Panc1 (cell line): ENCODE measurements at regions of chr18 and their contacts with region 1.

Region 1: DNA sequence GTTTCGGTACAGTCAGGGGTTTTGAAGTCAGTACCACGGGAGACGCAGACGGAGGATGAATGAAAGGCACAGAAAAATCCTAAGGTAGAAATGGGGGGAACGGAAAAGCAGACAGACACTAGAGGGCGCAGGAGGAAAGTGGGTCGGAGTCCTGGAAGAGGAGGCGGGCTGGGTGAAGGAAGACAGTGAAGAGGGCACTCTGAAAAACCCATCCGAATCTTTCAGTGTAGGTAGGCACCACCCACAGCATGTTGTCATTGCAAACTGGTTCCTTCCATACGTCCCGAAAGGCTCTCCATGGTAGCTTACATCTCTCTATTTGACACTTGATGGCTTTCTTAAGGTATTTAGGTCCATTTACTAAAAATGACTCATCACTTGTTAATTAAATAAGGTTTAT is 18.5 kb upstream of the ZNF236 start:
- DNase-seq: peak; percentile 79
- ATAC-seq: peak; percentile 81
- H3K4me3 ChIP-seq: peak overlapping the region in 1 of 2 experiments; percentile 35; a peak in 2 of 4 replicates
- H3K27ac ChIP-seq: no peak overlapping the region; the same call in 1 of the 2 replicates
- H3K4me1 ChIP-seq: peaks cover 4% of the 10 kb centered on the region
- H3K27me3 ChIP-seq: no peaks in the 10 kb centered on the region
- CTCF ChIP-seq: no peak

Region 2: DNA sequence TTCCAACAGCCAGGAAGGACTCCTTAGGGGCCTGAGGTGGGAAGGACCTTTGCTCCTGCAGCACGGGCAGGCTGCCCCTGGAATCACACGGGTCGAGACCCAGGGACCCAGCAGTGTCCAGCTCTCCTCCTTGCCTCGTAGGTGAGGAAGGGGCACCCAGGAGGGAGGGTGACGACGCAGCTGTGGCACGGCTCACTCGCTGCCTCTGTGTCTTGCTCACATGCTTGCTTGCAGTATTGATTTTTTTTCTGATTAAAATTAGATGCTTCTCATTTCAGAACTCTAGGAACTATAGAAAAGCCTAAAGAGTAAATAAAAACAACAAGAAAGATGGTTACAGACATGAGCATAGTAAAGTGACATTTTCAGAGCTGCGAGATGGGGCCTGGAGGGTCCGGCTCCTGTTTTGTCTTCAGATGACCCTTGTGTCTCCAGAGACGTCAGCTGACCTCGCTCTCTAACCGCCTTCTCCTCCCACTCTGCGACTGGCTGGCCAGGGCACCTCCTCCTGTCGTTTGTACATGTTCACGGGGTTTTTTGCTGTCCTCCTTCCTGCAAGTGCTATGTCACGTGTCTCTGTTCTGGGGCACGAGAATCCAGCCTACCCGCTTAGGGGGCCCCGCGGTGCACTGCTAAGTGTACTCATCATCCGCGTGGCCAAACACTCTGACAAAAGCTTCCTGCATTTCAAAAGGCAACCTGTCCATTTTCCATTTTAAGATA is 47.1 kb before region 1 on chr18:
- CTCF ChIA-PET with region 1: interaction called, 10 read pairs
- POLR2A ChIA-PET with region 1: no interaction called
- in situ Hi-C with region 1: no loop called
- intact Hi-C with region 1: no loop called
- DNase-seq: no peak
- ATAC-seq: no peak
- H3K4me3 ChIP-seq: no peak overlapping the region
- H3K27ac ChIP-seq: no peak overlapping the region
- H3K4me1 ChIP-seq: no peaks in the 10 kb centered on the region
- H3K27me3 ChIP-seq: no peaks in the 10 kb centered on the region
- CTCF ChIP-seq: no peak

Region 3: GRCh38 chr18:76875390-76876325 is 71.8 kb after region 1 on chr18:
- CTCF ChIA-PET with region 1: interaction called, 3 read pairs
- POLR2A ChIA-PET with region 1: no interaction called
- in situ Hi-C with region 1: no loop called
- intact Hi-C with region 1: loop called (anchors 2 kb)
- DNase-seq: peak; percentile 51
- ATAC-seq: peak; percentile 92
- H3K4me3 ChIP-seq: no peak overlapping the region
- H3K27ac ChIP-seq: no peak overlapping the region
- H3K4me1 ChIP-seq: no peaks in the 10 kb centered on the region
- H3K27me3 ChIP-seq: no peaks in the 10 kb centered on the region
- CTCF ChIP-seq: peak; percentile 97

Region 4: DNA sequence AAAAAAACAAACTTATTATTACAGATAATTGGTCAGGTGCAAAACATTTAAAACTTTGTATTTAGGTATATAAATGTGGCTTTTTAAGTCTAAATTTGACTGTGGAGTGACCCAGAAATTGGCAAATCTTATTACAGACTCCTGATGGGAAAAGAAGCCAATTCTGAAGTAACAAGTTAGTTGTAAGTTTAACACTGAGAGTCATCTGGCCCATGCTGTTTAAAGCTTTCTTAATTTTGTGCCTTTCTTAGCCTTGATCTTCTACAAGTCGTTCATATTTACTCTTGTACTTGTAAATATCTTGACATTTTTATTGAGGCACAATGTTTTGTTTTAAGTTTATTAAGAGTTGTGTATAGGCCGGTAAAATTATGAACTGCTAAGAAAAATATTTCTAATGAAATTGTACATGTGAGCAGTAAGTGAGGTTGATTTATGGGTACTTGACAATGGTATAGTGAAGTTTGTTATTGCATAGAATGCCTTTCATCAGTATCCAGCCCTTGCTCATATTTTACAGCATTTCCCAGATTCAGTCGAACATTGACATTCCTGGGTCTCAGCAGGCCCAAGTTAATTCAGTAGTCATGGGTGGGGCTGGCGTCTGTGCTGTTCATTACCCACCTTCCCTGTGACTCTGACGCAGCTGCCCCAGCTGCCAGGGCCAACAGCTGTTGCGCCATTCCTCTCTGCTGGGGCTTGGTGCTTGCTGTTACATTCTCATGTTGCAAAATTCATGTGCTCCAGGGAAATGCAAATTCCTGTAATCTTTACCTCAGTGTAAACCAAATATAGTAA is 139.9 kb after region 1 on chr18:
- CTCF ChIA-PET with region 1: interaction called, 11 read pairs
- POLR2A ChIA-PET with region 1: no interaction called
- in situ Hi-C with region 1: no loop called
- intact Hi-C with region 1: no loop called
- DNase-seq: no peak
- ATAC-seq: no peak
- H3K4me3 ChIP-seq: no peak overlapping the region
- H3K27ac ChIP-seq: no peak overlapping the region
- H3K4me1 ChIP-seq: no peaks in the 10 kb centered on the region
- H3K27me3 ChIP-seq: no peaks in the 10 kb centered on the region
- CTCF ChIP-seq: no peak

Region 5: GRCh38 chr18:76982841-76983587 is 179.2 kb after region 1 on chr18:
- CTCF ChIA-PET with region 1: interaction called, 25 read pairs
- POLR2A ChIA-PET with region 1: no interaction called
- in situ Hi-C with region 1: no loop called
- intact Hi-C with region 1: loop called (anchors 1 kb)
- DNase-seq: peak; percentile 70
- ATAC-seq: peak; percentile 94
- H3K4me3 ChIP-seq: peak overlapping the region in 1 of 2 experiments; percentile 22; a peak in 2 of 4 replicates
- H3K27ac ChIP-seq: no peak overlapping the region; the same call in 1 of the 2 replicates
- H3K4me1 ChIP-seq: peaks cover 6% of the 10 kb centered on the region
- H3K27me3 ChIP-seq: no peaks in the 10 kb centered on the region
- CTCF ChIP-seq: no peak

Region 6: DNA sequence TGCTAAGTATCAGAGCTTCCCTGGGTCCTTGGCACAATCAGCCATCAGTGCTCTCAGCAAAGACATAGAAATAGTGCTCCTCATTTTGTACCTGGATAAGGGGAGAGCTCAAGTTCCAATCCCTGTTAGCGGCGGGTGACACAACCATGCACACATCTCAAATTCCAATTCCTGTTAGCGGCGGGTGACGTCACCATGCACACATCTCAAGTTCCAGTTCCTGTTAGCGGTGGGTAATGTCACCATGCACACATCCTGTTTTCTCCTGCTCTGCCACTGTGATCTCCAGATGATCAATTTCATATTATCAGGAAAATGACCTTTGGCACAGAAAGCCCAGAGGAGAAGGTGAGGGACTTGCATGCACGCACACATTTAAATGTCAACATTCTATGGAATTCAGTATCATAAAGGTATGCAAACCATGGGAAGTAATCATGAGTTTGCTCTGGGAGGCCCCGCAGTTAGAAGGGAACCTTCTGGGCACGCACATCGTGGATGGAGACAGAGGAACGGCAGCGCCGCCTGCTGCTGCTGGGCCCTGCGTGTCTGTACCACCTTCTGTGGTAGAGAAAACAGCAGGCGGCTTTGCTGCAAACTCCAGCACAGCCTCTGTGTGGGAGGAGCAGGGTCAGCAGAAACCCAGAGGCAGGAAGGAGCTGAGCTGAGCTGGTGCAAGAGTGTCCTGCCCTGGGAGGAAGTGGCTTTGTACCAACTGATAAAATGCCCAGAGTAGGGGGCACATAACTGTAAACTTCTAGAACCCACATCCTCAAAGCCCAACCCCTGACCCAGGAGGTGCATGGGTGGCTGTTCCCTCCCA is 251.0 kb after region 1 on chr18:
- CTCF ChIA-PET with region 1: no interaction called
- POLR2A ChIA-PET with region 1: no interaction called
- in situ Hi-C with region 1: no loop called
- intact Hi-C with region 1: loop called (anchors 5 kb)
- DNase-seq: peak; percentile 95
- ATAC-seq: peak; percentile 92
- H3K4me3 ChIP-seq: peak overlapping the region in 1 of 2 experiments; percentile 34; a peak in 2 of 4 replicates
- H3K27ac ChIP-seq: peak overlapping the region; percentile 90
- H3K4me1 ChIP-seq: peaks cover 55% of the 10 kb centered on the region
- H3K27me3 ChIP-seq: no peaks in the 10 kb centered on the region
- CTCF ChIP-seq: no peak